ENCODE measurements at regions of chrX and their contacts with region 1.

Region 1: GRCh38 chrX:130836447-130836846 is 66.6 kb downstream of the ENOX2 start:
- DNase-seq: no peak

Region 2: GRCh38 chrX:130896802-130897501 is 60.5 kb after region 1 on chrX:
- intact Hi-C with region 1: loop called (anchors 10 kb)
- DNase-seq: no peak